ENCODE measurements at regions of chr21 and their contacts with region 1.

Region 1: DNA sequence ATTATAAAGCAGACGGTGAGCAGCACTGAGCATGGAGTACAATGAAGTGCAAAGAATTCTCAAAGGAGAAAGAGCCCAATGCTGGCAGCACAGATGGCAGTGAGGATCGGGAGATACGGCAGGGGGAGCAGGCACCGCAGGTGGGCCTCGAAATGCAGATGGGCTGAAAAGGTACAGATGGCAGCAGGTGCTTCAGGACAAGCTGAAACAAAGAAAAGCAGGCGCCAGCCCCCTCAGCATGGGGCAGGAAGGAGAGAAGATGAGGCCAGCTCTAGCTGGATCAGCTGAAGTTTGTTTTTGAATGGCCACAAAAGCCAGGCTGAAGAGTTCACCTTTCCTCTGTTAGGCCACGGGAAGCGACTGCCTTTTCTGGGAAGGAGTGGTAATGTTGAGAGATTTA is 7.7 kb downstream of the CFAP298 start:
- DNase-seq: no peak
- H3K4me3 Mint-ChIP-seq: no peak overlapping the region
- H3K27ac Mint-ChIP-seq: no peak overlapping the region
- H3K4me1 Mint-ChIP-seq: peaks cover 3% of the 10 kb centered on the region
- H3K27me3 Mint-ChIP-seq: no peaks in the 10 kb centered on the region

Region 2: GRCh38 chr21:32569261-32570230 is 34.9 kb before region 1 on chr21:
- CTCF ChIA-PET with region 1: interaction called, 17 read pairs
- POLR2A ChIA-PET with region 1: no interaction called
- DNase-seq: peak; percentile 83
- H3K4me3 Mint-ChIP-seq: peak overlapping the region; percentile 78
- H3K27ac Mint-ChIP-seq: peak overlapping the region; percentile 77
- H3K4me1 Mint-ChIP-seq: peaks cover 22% of the 10 kb centered on the region
- H3K27me3 Mint-ChIP-seq: peaks cover 6% of the 10 kb centered on the region

Region 3: GRCh38 chr21:32626621-32627196 is 22.2 kb after region 1 on chr21:
- CTCF ChIA-PET with region 1: interaction called, 12 read pairs
- POLR2A ChIA-PET with region 1: no interaction called
- DNase-seq: no peak
- H3K4me3 Mint-ChIP-seq: no peak overlapping the region
- H3K27ac Mint-ChIP-seq: no peak overlapping the region
- H3K4me1 Mint-ChIP-seq: peaks cover 4% of the 10 kb centered on the region
- H3K27me3 Mint-ChIP-seq: peaks cover 5% of the 10 kb centered on the region

Region 4: GRCh38 chr21:32641710-32642698 is 37.5 kb after region 1 on chr21:
- CTCF ChIA-PET with region 1: no interaction called
- POLR2A ChIA-PET with region 1: no interaction called
- DNase-seq: no peak
- H3K4me3 Mint-ChIP-seq: no peak overlapping the region
- H3K27ac Mint-ChIP-seq: no peak overlapping the region
- H3K4me1 Mint-ChIP-seq: peaks cover 4% of the 10 kb centered on the region
- H3K27me3 Mint-ChIP-seq: no peaks in the 10 kb centered on the region

Region 5: DNA sequence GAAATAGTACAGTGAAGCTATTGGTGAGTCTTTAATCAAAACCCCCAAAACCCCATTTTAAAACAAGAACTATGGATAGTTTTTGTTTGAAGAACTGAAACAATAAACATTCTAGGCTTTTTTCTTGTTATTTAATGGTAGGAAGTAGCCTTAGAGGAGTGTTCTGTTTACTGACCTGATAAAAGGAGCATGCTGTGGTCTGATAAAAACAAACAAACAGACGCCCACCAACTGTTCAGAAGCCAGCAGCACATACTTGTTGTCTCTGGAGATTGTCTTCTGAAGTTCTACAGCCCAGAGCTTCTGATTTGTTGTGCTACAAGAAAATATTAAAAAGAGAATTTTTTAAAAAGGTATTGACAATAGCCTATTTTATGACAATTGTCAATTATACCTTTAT is 61.8 kb after region 1 on chr21:
- CTCF ChIA-PET with region 1: no interaction called
- POLR2A ChIA-PET with region 1: no interaction called
- DNase-seq: no peak
- H3K4me3 Mint-ChIP-seq: no peak overlapping the region
- H3K27ac Mint-ChIP-seq: no peak overlapping the region
- H3K4me1 Mint-ChIP-seq: no peaks in the 10 kb centered on the region
- H3K27me3 Mint-ChIP-seq: no peaks in the 10 kb centered on the region

Region 6: GRCh38 chr21:32900814-32901213 is 296.4 kb after region 1 on chr21:
- CTCF ChIA-PET with region 1: no interaction called
- POLR2A ChIA-PET with region 1: no interaction called
- DNase-seq: no peak
- H3K4me3 Mint-ChIP-seq: no peak overlapping the region
- H3K27ac Mint-ChIP-seq: no peak overlapping the region
- H3K4me1 Mint-ChIP-seq: no peaks in the 10 kb centered on the region
- H3K27me3 Mint-ChIP-seq: peaks cover 10% of the 10 kb centered on the region